Esophagus muscularis mucosa (tissue), 4 donors: ENCODE measurements at regions of chr10 and their contacts with region 1.

Region 1: DNA sequence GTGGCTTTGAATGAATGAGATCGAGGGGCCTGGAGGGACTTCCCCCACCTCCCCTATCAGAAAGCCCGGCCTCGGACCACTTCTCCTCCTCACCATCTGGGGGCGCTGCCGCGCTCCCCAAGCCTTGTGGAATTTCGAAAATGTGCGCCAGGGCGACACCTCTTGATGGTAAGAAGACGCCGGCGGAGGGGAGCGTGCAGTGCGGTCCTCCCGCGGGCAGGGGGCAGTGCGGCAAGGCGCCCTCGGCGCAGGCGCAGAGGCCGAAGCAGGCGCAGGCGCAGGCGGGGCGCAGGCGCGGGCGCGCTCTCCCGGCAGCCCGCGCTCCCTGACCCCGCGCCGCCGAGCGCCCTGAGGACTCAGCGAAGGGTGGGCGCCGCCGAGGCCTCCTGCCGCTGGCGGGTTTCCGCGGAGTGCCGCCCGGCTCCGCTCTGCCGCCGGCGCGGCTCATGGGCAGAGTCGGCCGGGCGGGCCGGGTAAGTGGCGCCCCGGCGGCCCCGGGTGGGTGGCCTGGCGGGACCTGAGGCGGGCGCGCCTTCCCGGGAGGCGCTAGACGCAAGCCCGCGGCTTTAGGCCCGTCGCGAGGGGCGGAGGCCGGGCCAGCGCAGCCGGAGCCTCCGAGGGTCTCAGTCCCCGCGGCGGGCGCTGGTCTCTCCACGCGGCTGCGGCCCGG is at the start of gene RBM17:
- DNase-seq: peak; percentile 99
- H3K4me3 ChIP-seq: peak within 1 kb of the TSS; percentile 93 to 99 (median 99)
- H3K27ac ChIP-seq: peak within 1 kb of the TSS; percentile 88 to 95 (median 90)
- H3K4me1 ChIP-seq: peaks cover 50 to 60% (median 56%) of the 10 kb centered on the region in 4 donors
- H3K27me3 ChIP-seq: peaks cover 0 to 5% (median 0%) of the 10 kb centered on the region in 4 donors
- CTCF ChIP-seq: peak in 2 of 3 experiments; percentile 100
- EP300 ChIP-seq: no peak
- POLR2A ChIP-seq: no peak
- total RNA-seq, gene RBM17: 48.5 to 72.9 (median 59.5) TPM

Region 2: GRCh38 chr10:5948999-5949759 is 139.7 kb before region 1 on chr10:
- intact Hi-C with region 1: loop called (anchors 5 kb)
- DNase-seq: no peak
- H3K4me3 ChIP-seq: no peak overlapping the region
- H3K27ac ChIP-seq: peak overlapping the region in 2 of 4 donors; percentile 20 to 47
- H3K4me1 ChIP-seq: peaks cover 31 to 59% (median 53%) of the 10 kb centered on the region in 4 donors
- H3K27me3 ChIP-seq: peaks cover 0 to 10% (median 0%) of the 10 kb centered on the region in 4 donors
- CTCF ChIP-seq: peak; percentile 29 to 41 (median 35)
- EP300 ChIP-seq: no peak
- POLR2A ChIP-seq: no peak

Region 3: GRCh38 chr10:6128591-6129251 is 39.9 kb after region 1 on chr10:
- intact Hi-C with region 1: no loop called
- DNase-seq: no peak
- H3K4me3 ChIP-seq: peak overlapping the region in 1 of 4 donors; percentile 19
- H3K27ac ChIP-seq: no peak overlapping the region
- H3K4me1 ChIP-seq: peaks cover 13 to 28% (median 27%) of the 10 kb centered on the region in 4 donors
- H3K27me3 ChIP-seq: peaks cover 0 to 16% (median 0%) of the 10 kb centered on the region in 4 donors
- CTCF ChIP-seq: no peak
- EP300 ChIP-seq: no peak
- POLR2A ChIP-seq: no peak